ENCODE measurements at regions of chr1 and their contacts with region 1.

Region 1: DNA sequence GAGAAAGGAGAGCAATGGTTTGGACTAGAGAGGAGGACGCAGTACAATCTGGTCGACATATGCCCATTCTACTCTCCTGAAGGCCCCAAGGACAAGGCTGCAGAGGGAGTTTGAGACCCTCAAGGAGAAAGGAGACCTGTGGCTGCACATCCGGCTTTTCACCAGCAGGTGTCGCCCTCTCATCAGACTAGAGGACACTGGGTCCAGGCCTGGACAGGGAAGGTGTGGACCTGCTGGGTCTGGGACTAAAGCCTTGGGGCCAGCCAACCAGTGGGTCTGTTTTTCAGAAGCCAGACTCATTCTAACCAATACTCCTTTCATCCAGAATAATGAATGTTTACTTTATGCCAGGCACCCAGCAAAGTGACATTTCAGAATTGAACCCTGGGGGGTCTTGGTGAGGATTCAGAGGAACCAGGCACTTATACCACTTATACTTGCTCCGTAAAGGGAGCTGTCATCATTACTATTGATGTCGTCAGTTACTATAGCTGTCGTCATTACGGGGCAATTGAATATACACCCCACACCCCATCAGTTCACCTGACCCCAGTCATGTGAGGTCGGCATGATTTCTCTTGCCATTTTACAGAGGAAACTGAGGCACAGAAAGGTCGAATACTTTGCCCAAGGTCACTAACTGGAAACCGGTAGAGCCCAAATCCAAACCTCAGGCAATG is 5.1 kb downstream of the SRARP start:
- DNase-seq: peak; percentile 85
- H3K4me3 Mint-ChIP-seq: no peak overlapping the region
- H3K27ac Mint-ChIP-seq: no peak overlapping the region
- H3K4me1 Mint-ChIP-seq: peaks cover 14% of the 10 kb centered on the region
- H3K27me3 Mint-ChIP-seq: peaks cover 2% of the 10 kb centered on the region

Region 2: DNA sequence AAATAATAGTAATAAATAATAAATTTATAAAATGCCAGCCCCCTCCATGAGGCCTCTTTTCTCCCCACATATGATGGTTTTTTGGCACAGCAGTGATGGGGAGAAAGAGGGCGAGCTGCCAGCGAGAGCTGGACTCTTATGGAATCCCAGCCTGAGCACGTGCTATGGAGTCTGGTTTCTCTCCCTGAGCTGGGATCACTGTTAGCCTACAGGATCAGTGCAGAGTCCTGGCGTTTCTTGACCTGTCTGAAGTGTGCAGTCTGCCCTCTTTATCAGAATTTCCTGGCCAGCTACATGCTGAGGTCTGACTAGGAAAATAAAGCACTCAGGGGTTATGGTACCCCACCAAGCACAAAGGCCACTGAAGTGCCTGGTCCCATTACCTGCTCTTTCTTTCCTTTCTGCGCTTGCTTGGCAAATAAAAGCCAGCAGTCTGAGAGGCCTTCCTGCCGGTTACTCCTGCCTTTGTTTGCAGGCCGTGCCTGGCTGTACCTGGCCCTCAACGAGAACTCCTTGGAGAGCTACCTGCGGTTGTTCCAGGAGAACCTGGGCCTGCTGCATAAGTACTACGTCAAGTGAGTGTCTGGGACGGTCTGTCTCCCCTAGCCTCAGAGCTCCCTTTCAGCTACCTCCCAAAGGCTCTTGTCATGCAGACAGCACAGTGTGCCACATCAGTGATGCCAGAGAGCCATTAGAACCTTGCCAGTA is 291.6 kb before region 1 on chr1:
- CTCF ChIA-PET with region 1: no interaction called
- intact Hi-C with region 1: no loop called
- DNase-seq: no peak
- H3K4me3 Mint-ChIP-seq: no peak overlapping the region
- H3K27ac Mint-ChIP-seq: no peak overlapping the region
- H3K4me1 Mint-ChIP-seq: no peaks in the 10 kb centered on the region
- H3K27me3 Mint-ChIP-seq: no peaks in the 10 kb centered on the region

Region 3: DNA sequence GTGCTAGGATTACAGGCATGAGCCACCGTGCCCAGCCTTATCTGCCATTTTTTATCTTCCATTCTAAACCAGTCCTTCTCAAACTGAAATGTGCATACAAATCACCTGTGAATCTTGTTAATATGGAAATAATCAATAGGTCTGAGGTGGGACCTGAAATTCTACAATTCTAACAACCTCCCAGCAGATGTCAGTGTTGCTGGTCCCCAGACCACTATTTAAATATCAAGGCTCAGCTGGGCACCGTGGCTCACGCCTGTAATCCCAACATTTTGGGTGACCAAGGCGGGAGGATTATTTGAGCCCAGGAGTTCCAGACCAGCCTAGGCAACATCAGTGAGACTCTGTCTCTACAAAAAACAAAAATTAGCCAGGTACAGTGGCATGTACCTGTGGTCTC is 205.8 kb before region 1 on chr1:
- CTCF ChIA-PET with region 1: interaction called, 6 read pairs
- intact Hi-C with region 1: loop called (anchors 1 kb)
- DNase-seq: peak; percentile 32
- H3K4me3 Mint-ChIP-seq: no peak overlapping the region
- H3K27ac Mint-ChIP-seq: no peak overlapping the region
- H3K4me1 Mint-ChIP-seq: no peaks in the 10 kb centered on the region
- H3K27me3 Mint-ChIP-seq: no peaks in the 10 kb centered on the region

Region 4: GRCh38 chr1:15994590-15995351 is 14.4 kb before region 1 on chr1:
- CTCF ChIA-PET with region 1: interaction called, 10 read pairs
- intact Hi-C with region 1: no loop called
- DNase-seq: peak; percentile 68
- H3K4me3 Mint-ChIP-seq: no peak overlapping the region
- H3K27ac Mint-ChIP-seq: no peak overlapping the region
- H3K4me1 Mint-ChIP-seq: no peaks in the 10 kb centered on the region
- H3K27me3 Mint-ChIP-seq: no peaks in the 10 kb centered on the region

Region 5: GRCh38 chr1:16055613-16056520 is 46.7 kb after region 1 on chr1:
- CTCF ChIA-PET with region 1: interaction called, 23 read pairs
- intact Hi-C with region 1: loop called (anchors 1 kb)
- DNase-seq: peak; percentile 93
- H3K4me3 Mint-ChIP-seq: no peak overlapping the region
- H3K27ac Mint-ChIP-seq: no peak overlapping the region
- H3K4me1 Mint-ChIP-seq: peaks cover 2% of the 10 kb centered on the region
- H3K27me3 Mint-ChIP-seq: no peaks in the 10 kb centered on the region

Region 6: GRCh38 chr1:16243936-16244649 is 234.9 kb after region 1 on chr1:
- CTCF ChIA-PET with region 1: no interaction called
- intact Hi-C with region 1: loop called (anchors 1 kb)
- DNase-seq: peak; percentile 91
- H3K4me3 Mint-ChIP-seq: no peak overlapping the region
- H3K27ac Mint-ChIP-seq: no peak overlapping the region
- H3K4me1 Mint-ChIP-seq: peaks cover 10% of the 10 kb centered on the region
- H3K27me3 Mint-ChIP-seq: no peaks in the 10 kb centered on the region

Measured in activated naive CD4-positive, alpha-beta T cell treated with anti-CD3 and anti-CD28 coated beads for 36 hours (primary cell).